SK-N-SH (cell line): ENCODE measurements at regions of chr9 and their contacts with region 1.

Region 1: GRCh38 chr9:100714372-100715099 is 136.7 kb downstream of the CAVIN4 start:
- DNase-seq: peak; percentile 74
- H3K4me3 ChIP-seq: peak overlapping the region in 1 of 2 experiments; percentile 41; a peak in 1 of 4 replicates
- H3K27ac ChIP-seq: no peak overlapping the region
- H3K4me1 ChIP-seq: no peaks in the 10 kb centered on the region
- H3K27me3 ChIP-seq: no peaks in the 10 kb centered on the region; the same call in 1 of the 2 replicates
- CTCF ChIP-seq: peak; percentile 92
- EP300 ChIP-seq: no peak
- RAD21 ChIP-seq: peak; percentile 77

Region 2: DNA sequence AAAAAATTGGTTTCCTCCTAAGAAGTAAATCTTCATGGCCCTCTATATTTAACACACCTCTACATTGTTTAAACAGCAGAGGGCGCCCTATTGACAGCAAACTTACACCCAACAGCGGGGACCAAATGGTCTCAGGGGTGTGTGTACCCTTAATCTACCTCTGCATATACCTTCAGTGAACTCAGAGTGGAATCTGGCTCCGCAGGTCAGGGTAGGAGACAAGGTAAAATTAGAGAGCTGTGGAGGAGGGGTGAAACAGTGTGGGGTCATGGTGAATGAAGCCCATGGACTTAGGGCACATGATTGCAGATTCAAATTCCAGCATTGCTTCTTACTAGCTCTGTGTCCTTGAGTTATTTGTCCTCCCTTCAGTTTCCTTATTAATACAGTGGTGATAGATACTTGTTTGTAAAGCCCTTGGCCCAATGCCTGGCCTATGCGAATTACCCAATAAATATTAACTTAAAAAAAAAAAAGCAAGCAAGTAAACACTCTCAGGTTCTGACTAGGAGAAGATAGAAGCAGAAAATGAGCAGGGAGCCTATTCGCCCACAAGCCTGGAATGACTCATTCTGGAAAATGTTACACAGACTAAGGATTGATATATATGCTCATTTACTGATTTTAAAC is 13.7 kb before region 1 on chr9:
- CTCF ChIA-PET with region 1: interaction called, 34 read pairs
- POLR2A ChIA-PET with region 1: no interaction called
- DNase-seq: peak; percentile 23
- H3K4me3 ChIP-seq: peak overlapping the region in 1 of 2 experiments; percentile 53; a peak in 1 of 4 replicates
- H3K27ac ChIP-seq: no peak overlapping the region
- H3K4me1 ChIP-seq: no peaks in the 10 kb centered on the region
- H3K27me3 ChIP-seq: no peaks in the 10 kb centered on the region
- CTCF ChIP-seq: peak; percentile 64
- EP300 ChIP-seq: no peak
- RAD21 ChIP-seq: peak; percentile 24; the same call in 1 of the 2 replicates

Region 3: GRCh38 chr9:100725371-100725770 is 10.8 kb after region 1 on chr9:
- CTCF ChIA-PET with region 1: interaction called, 15 read pairs
- POLR2A ChIA-PET with region 1: no interaction called
- DNase-seq: no peak
- H3K4me3 ChIP-seq: no peak overlapping the region
- H3K27ac ChIP-seq: no peak overlapping the region
- H3K4me1 ChIP-seq: no peaks in the 10 kb centered on the region; a peak in 1 of 4 replicates
- H3K27me3 ChIP-seq: no peaks in the 10 kb centered on the region
- CTCF ChIP-seq: no peak
- EP300 ChIP-seq: no peak
- RAD21 ChIP-seq: no peak

Region 4: GRCh38 chr9:101235105-101235866 is 520.8 kb after region 1 on chr9:
- CTCF ChIA-PET with region 1: interaction called, 13 read pairs
- POLR2A ChIA-PET with region 1: no interaction called
- DNase-seq: peak; percentile 2
- H3K4me3 ChIP-seq: peak overlapping the region in 1 of 2 experiments; percentile 51; a peak in 1 of 4 replicates
- H3K27ac ChIP-seq: no peak overlapping the region
- H3K4me1 ChIP-seq: no peaks in the 10 kb centered on the region
- H3K27me3 ChIP-seq: no peaks in the 10 kb centered on the region
- CTCF ChIP-seq: peak; percentile 64
- EP300 ChIP-seq: no peak
- RAD21 ChIP-seq: peak; percentile 69